Esophagus squamous epithelium (tissue), 5 donors: ENCODE measurements at regions of chr13 and their contacts with region 1.

Region 1: DNA sequence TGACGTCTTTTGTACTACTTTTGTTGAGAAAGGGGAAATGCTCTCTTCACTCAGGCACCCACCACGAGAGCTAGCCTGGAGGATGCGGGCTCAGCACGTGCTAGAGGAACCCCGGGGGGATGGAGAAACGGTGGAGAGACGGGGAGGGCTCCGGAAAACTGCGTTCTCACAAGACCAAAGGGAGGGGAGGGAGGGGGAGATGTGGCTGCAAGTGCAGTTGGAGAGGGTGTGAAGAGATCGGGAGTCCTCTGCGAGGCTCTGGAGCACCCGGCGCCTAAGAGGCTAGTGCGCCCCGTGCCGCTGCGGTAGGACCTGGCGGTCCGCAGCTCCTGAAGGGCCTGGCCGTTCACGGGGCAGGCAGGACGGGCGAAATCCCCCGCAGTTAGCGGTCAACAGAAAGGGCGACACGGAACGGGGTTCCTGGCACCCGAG is 43.4 kb upstream of the XPO4 start:
- DNase-seq: no peak
- H3K4me3 ChIP-seq: peak overlapping the region in 1 of 4 donors; percentile 52
- H3K27ac ChIP-seq: no peak overlapping the region
- H3K4me1 ChIP-seq: peaks cover 0 to 37% (median 10%) of the 10 kb centered on the region in 3 donors
- H3K27me3 ChIP-seq: peaks cover 0 to 6% (median 0%) of the 10 kb centered on the region in 4 donors
- CTCF ChIP-seq: no peak
- POLR2A ChIP-seq: no peak

Region 2: DNA sequence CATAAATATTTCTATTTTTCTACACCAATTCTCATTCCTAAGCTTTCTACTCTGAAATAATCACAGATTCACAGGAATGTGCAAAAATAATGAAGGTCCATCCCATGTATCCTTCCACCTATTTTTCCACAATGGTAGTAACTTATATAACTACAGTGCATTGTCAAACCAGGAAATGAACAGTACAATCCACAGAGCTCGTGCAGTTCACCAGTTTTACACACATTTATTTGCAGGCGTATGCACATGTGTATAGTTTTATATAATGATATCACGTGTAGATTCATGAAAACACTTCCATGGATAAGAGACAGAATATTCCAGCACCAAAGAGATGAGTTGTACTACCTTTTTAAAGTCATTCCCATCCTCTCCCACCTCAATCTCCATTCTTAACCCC is 185.1 kb before region 1 on chr13:
- intact Hi-C with region 1: no loop called
- DNase-seq: no peak
- H3K4me3 ChIP-seq: no peak overlapping the region
- H3K27ac ChIP-seq: no peak overlapping the region
- H3K4me1 ChIP-seq: no peaks in the 10 kb centered on the region
- H3K27me3 ChIP-seq: no peaks in the 10 kb centered on the region
- CTCF ChIP-seq: no peak
- POLR2A ChIP-seq: no peak

Region 3: DNA sequence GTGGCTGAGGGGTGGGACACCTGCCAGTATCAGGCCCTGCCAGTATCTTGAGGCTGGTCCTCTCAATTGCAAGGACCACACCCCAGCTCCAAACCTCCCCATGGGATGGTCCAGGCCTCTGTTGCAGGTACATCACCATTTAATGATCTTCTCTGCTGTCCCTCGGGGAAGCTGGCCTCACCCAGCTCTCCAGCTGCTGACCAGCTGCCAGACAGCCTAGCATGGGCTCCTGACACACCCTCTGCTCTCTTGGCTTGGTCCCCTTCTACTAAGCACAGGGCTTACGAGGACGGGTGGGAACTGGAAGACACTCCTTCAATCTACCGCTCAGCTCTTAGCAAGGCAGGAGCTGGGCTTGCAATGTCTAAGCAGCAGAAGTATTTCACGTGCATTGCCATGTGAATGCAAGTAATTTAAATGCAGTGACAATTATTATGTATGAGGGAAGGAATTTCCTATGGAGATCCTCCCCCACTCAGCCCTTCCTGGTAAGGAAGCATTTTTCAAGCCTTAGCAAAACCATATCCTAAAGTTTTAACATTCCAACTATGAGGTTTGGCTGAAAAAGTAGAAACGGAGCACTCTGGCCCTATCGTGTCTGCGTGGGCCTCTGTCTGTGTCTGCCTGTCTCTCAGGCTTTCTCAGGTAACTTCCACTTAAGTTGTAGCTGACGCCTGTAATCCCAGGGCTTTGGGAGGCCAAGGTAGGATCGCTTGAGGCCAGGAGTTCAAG is 51.6 kb after region 1 on chr13:
- intact Hi-C with region 1: no loop called
- DNase-seq: no peak
- H3K4me3 ChIP-seq: no peak overlapping the region
- H3K27ac ChIP-seq: peak overlapping the region in 2 of 4 donors; percentile 19 to 41
- H3K4me1 ChIP-seq: peaks cover 3 to 50% (median 14%) of the 10 kb centered on the region in 3 donors
- H3K27me3 ChIP-seq: no peaks in the 10 kb centered on the region
- CTCF ChIP-seq: no peak
- POLR2A ChIP-seq: no peak

Region 4: GRCh38 chr13:21060987-21061763 is 115.2 kb after region 1 on chr13 and contains the start of gene LATS2:
- intact Hi-C with region 1: loop called (anchors 10 kb)
- DNase-seq: peak; percentile 53
- H3K4me3 ChIP-seq: peak within 1 kb of the TSS; percentile 79 to 97 (median 90)
- H3K27ac ChIP-seq: peak within 1 kb of the TSS; percentile 94 to 100 (median 96)
- H3K4me1 ChIP-seq: peaks cover 0 to 49% (median 1%) of the 10 kb centered on the region in 3 donors
- H3K27me3 ChIP-seq: no peaks in the 10 kb centered on the region
- CTCF ChIP-seq: peak in 3 of 6 experiments; percentile 18 to 51 (median 31)
- POLR2A ChIP-seq: peak in 3 of 4 donors; percentile 69 to 95 (median 91)
- total RNA-seq, gene LATS2: 7.7 to 18.9 (median 10.7) TPM

Region 5: DNA sequence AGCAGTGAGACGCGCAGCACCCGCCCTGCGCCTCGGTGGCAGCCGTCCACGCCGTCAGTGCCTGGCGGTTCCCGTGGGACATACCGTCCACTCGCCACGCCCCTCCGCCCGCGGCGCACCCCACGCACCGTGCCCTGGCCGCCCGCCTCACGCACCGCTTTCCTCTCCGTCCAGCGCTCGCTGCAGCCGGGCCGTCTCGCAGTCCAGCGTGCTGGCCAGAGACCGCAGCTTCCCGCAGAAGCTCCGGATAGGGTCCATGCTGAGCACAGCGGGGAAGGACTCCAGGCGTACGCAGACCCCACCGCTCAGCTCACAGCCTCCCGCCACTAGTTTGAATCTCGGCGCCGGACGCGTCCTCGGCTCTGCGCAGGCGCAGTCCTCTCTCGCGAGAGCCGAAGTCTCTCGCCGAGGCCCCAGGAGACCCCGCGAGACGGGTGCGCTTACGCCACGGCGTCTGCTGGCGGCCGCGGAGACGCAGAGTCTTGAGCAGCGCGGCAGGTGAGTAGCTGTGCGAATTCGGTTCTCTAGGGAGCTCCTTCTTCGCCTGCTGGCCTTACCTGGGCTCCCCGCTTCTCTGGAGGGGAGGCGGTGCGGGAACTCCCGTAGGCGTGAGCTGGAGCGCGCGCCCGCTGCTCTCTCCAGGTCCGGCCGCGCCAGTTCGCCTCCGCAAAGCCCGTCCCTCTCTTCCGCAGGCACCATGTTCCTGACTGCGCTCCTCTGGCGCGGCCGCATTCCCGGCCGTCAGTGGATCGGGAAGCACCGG is 230.4 kb after region 1 on chr13 and contains the starts of genes MRPL57 and SKA3:
- intact Hi-C with region 1: loop called (anchors 10 kb)
- DNase-seq: peak; percentile 47
- H3K4me3 ChIP-seq: peak within 1 kb of the TSS; percentile 56 to 99 (median 84)
- H3K27ac ChIP-seq: peak within 1 kb of the TSS; percentile 94 to 99 (median 98)
- H3K4me1 ChIP-seq: peaks cover 12 to 29% (median 14%) of the 10 kb centered on the region in 3 donors
- H3K27me3 ChIP-seq: no peaks in the 10 kb centered on the region
- CTCF ChIP-seq: peak; percentile 6 to 43 (median 20)
- POLR2A ChIP-seq: peak in 2 of 4 donors; percentile 92 to 93
- total RNA-seq, gene MRPL57: 26.2 to 38.6 (median 30.8) TPM
- total RNA-seq, gene SKA3: 3.4 to 20.8 (median 7.9) TPM

Region 6: DNA sequence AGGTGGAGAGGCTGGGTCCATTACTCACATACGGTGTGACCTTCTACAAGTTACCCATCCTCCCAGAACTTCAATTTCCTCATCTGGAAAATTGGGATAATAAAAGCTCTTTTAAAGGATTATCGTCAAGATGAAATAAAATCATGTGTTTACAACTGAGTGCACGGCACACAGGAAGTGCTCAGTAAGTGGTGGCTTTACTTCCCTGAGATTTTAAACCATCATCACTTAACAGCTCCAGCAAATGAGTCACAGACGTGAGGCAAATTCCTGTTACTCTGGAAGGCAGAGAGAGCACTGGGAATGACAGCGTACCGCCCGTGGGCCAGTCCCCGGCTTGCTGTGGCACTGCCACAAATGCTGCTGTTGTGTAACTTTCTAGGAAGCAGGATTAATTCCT is 294.6 kb after region 1 on chr13:
- intact Hi-C with region 1: no loop called
- DNase-seq: no peak
- H3K4me3 ChIP-seq: no peak overlapping the region
- H3K27ac ChIP-seq: no peak overlapping the region
- H3K4me1 ChIP-seq: peaks cover 0 to 12% (median 0%) of the 10 kb centered on the region in 3 donors
- H3K27me3 ChIP-seq: no peaks in the 10 kb centered on the region
- CTCF ChIP-seq: no peak
- POLR2A ChIP-seq: no peak